Activated CD4-positive, alpha-beta T cell treated with anti-CD3 and anti-CD28 coated beads for 36 hours (primary cell): ENCODE measurements at regions of chr1 and their contacts with region 1.

Region 1: GRCh38 chr1:43974443-43975248 is at the start of gene ATP6V0B:
- DNase-seq: peak; percentile 99
- ATAC-seq: peak; percentile 76
- H3K4me3 Mint-ChIP-seq: peak within 1 kb of the TSS; percentile 81
- H3K27ac Mint-ChIP-seq: peak within 1 kb of the TSS; percentile 88
- H3K4me1 Mint-ChIP-seq: peaks cover 48% of the 10 kb centered on the region
- H3K27me3 Mint-ChIP-seq: no peaks in the 10 kb centered on the region
- total RNA-seq, gene ATP6V0B: 39.4 to 75.6 TPM

Region 2: DNA sequence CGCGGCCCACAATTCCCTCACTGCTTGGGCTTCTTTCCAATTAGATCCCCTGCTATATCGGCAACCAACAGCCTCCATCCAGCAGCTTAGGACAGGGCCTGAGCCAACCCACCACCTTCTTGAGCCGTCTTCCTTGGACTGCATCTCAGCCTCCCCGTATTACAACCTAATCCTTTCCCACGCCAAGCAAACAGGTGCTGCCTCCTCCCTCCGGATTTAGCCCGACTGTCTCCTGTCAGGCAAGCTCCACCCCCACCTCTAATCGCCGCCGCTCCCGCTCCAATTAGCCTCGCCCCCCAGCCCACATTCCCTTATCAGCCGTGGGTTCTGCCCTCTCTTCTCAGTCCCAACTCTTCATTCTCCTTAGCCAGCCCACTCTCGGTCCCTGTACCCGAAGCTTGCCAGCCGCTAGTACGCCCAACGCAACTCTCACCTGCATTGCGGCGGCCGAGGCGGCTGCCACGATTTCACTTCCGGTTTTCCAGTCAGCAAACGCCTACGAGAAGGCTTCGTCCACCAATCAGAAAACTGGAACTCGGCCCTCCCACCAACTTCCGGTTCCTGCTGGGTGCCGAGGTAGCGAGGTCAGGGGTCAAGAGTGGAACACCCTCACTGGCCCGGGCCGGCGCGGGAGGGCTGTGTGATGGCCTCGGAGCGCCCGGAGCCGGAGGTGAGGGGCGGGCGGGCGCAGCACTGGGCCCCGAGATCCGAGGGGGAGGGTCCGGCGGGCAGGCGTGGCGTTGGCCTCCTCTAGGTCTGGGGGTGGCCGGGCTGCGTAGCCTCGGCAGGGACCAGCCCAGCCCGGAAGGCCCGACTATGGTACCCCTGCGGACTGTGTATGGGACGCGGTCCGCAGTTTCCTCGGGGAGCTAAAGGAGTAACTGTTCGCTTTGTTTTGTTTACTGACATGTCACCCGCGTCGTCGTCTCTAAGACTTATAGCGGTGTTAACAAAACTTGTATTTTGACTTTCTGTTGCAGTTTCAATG is 585.0 kb before region 1 on chr1 and contains the starts of genes MED8 and SZT2:
- CTCF ChIA-PET with region 1: no interaction called
- POLR2A ChIA-PET with region 1: no interaction called
- intact Hi-C with region 1: loop called in 1 of 2 experiments (anchors 5 kb)
- DNase-seq: peak; percentile 94
- ATAC-seq: peak; percentile 93
- H3K4me3 Mint-ChIP-seq: peak within 1 kb of the TSS; percentile 99
- H3K27ac Mint-ChIP-seq: peak within 1 kb of the TSS; percentile 97
- H3K4me1 Mint-ChIP-seq: peaks cover 39% of the 10 kb centered on the region
- H3K27me3 Mint-ChIP-seq: no peaks in the 10 kb centered on the region
- total RNA-seq, gene MED8: 32.3 to 36.6 TPM
- total RNA-seq, gene SZT2: 33.6 to 36.3 TPM

Region 3: DNA sequence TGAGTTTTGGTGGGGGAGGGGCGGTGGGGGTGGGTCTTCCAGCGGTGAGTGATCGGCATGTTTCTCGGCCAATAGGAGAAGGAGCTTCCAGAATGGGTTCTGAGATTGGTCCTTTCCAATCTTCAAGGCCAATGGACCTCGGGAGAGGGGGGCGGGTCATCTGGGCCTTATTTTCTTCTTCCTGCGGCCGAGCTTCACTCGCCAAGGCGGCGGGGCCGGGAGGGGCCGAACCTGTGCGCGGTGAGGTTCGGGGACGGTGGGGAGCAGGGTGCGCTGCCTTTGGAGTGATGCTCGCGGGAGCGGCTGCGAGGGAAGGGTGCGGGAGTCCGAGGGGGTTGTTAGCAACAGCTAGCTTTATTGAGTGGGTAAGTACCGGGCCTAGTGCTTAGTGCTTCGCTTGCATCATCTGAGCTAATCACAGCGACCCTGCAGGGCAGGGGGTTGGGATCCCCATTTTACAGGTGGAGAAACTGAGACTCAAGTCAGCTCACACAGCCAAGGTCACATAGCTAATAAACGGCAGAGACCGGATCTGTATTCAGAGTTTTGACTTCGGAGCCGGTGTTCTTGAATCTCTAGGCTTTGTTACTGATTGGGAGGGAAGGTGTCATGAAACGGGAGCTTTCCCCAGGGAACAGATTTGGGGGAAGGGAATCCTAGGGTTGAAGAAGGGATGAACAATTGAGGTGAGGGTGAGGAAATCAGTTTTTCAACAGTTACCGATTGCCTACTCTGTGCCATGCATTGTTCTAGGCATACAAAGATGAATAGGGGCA is 324.1 kb before region 1 on chr1:
- CTCF ChIA-PET with region 1: no interaction called
- POLR2A ChIA-PET with region 1: interaction called, 3 read pairs
- intact Hi-C with region 1: loop called (anchors 1 to 5 kb)
- DNase-seq: peak; percentile 95
- ATAC-seq: peak; percentile 81
- H3K4me3 Mint-ChIP-seq: peak overlapping the region; percentile 89
- H3K27ac Mint-ChIP-seq: peak overlapping the region; percentile 97
- H3K4me1 Mint-ChIP-seq: peaks cover 31% of the 10 kb centered on the region
- H3K27me3 Mint-ChIP-seq: no peaks in the 10 kb centered on the region

Region 4: DNA sequence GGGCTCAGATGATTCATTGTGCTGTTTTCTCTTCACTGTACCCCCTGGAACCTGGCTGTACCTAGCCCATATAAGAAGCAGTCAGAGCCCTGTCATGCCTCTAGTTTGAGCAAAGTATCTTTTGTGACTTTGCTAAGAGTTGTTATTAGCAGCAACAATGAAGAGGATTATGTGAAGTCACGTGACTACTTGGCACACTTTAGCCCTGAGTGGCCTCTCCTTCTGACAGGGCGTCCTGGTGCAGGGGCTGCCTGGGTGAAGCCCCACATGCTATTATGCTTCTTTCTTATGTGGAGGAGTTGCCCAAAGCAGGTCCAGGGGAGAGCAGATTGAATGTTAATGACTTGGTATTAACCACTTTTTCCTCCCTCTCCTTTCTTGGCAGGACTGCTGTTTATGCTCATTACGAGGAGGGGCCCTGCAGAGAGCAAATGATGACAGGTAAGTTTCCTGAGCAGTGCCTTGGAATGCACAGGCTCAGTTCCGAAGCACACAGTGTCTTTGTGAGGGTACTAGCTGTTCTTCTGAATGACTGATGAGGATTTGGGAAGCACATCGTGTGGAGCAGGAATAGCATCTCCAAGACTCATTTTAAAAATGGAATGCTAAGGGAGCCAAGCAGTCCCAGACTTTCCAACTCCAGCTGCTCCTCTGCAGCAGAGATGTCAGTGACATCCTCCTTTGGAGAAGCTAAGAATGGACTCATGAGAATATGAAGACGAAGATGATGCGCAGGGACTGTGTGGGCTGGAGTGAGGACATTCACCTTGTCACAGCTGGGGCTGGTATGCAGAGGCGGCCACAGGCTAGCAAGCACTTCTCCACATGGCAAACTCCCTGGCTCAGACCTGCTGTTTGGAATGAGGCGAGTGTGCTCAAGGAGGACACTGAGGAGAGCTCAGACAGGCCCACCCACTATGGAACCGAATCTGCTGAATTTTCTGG is 282.5 kb before region 1 on chr1:
- CTCF ChIA-PET with region 1: no interaction called
- POLR2A ChIA-PET with region 1: no interaction called
- intact Hi-C with region 1: no loop called
- DNase-seq: no peak
- ATAC-seq: no peak
- H3K4me3 Mint-ChIP-seq: no peak overlapping the region
- H3K27ac Mint-ChIP-seq: no peak overlapping the region
- H3K4me1 Mint-ChIP-seq: no peaks in the 10 kb centered on the region
- H3K27me3 Mint-ChIP-seq: no peaks in the 10 kb centered on the region

Region 5: GRCh38 chr1:43868741-43869067 is 105.9 kb before region 1 on chr1:
- CTCF ChIA-PET with region 1: no interaction called
- POLR2A ChIA-PET with region 1: no interaction called
- intact Hi-C with region 1: no loop called
- DNase-seq: no peak
- ATAC-seq: no peak
- H3K4me3 Mint-ChIP-seq: no peak overlapping the region
- H3K27ac Mint-ChIP-seq: peak overlapping the region; percentile 76
- H3K4me1 Mint-ChIP-seq: peaks cover 38% of the 10 kb centered on the region
- H3K27me3 Mint-ChIP-seq: no peaks in the 10 kb centered on the region

Region 6: DNA sequence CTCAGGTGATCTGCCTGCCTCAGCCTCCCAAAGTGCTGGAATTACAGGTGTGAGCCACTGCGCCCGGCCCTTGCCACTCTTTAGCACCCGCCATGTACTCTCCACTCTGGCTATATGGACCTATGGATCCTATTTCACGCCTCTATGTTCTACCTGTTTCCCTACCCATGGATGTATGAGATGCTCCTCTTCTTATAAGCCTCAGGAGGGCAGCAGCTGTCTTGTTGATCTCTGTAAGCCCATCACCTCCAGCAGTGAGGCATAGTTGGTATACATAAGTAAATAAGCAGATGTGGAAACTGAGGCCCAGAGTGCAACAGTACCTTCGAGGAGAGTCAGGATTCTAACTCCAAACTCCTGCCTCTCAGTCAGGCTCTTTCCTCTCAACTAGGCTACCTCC is 65.8 kb before region 1 on chr1:
- CTCF ChIA-PET with region 1: no interaction called
- POLR2A ChIA-PET with region 1: no interaction called
- intact Hi-C with region 1: no loop called
- DNase-seq: no peak
- ATAC-seq: no peak
- H3K4me3 Mint-ChIP-seq: no peak overlapping the region
- H3K27ac Mint-ChIP-seq: no peak overlapping the region
- H3K4me1 Mint-ChIP-seq: no peaks in the 10 kb centered on the region
- H3K27me3 Mint-ChIP-seq: no peaks in the 10 kb centered on the region

Region 7: DNA sequence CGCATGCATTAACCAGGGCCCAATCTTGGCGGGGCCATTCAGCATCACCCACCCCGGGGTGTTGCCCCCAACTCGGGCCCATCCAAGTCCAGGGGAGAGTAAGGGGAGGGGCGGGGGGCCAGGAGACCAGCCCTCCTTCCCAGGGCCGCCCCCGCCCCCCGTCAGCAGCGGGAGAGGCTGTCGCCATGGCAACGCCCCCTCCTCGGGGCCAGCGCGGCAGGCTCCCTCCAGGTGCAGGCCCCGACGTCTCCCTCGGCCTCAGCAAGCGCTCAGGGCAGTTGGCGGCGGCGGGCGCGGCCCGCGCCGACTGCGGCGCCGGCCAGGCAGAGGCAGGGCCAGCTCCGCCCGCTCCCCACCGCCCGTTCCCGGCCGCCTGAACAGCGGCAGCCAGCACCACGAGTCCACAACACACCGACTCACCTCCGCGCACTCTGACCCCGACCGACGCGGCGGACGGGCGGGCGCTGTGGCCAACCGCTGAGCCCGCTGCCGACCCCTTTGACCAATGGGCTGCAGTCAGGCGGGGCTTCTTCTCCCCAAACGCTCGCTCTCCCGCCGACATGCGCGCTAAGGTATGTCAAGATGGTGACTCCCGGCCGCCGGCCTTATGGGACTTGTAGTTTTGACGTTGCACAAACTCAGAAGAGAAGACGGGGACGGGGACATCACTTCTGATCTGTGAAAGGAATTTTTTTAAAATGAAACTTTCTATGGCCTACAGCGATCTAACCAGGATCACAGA is 380.4 kb after region 1 on chr1 and contains the start of gene ERI3:
- CTCF ChIA-PET with region 1: no interaction called
- POLR2A ChIA-PET with region 1: no interaction called
- intact Hi-C with region 1: loop called in 1 of 2 experiments (anchors 1 kb)
- DNase-seq: peak; percentile 98
- ATAC-seq: peak; percentile 100
- H3K4me3 Mint-ChIP-seq: peak within 1 kb of the TSS; percentile 90
- H3K27ac Mint-ChIP-seq: peak within 1 kb of the TSS; percentile 82
- H3K4me1 Mint-ChIP-seq: peaks cover 34% of the 10 kb centered on the region
- H3K27me3 Mint-ChIP-seq: no peaks in the 10 kb centered on the region
- total RNA-seq, gene ERI3: 36.7 to 41.3 TPM

Region 8: GRCh38 chr1:44674113-44675000 is 699.7 kb after region 1 on chr1 and contains the starts of genes ARMH1 and TMEM53:
- CTCF ChIA-PET with region 1: no interaction called
- POLR2A ChIA-PET with region 1: no interaction called
- intact Hi-C with region 1: loop called in 1 of 2 experiments (anchors 1 kb)
- DNase-seq: peak; percentile 99
- ATAC-seq: peak; percentile 97
- H3K4me3 Mint-ChIP-seq: peak within 1 kb of the TSS; percentile 78
- H3K27ac Mint-ChIP-seq: peak within 1 kb of the TSS; percentile 84
- H3K4me1 Mint-ChIP-seq: peaks cover 24% of the 10 kb centered on the region
- H3K27me3 Mint-ChIP-seq: no peaks in the 10 kb centered on the region
- total RNA-seq, gene ARMH1: 67.3 to 75.1 TPM
- total RNA-seq, gene TMEM53: 4.3 to 5.5 TPM